Right cardiac atrium (tissue), 5 donors: ENCODE measurements at regions of chr2 and their contacts with region 1.

Region 1: GRCh38 chr2:219206442-219207253 is at the start of gene ZFAND2B:
- DNase-seq: peak; percentile 96 to 99 (median 98)
- ATAC-seq: peak; percentile 97 to 98
- H3K4me3 ChIP-seq: peak within 1 kb of the TSS; percentile 59
- H3K27ac ChIP-seq: peak within 1 kb of the TSS; percentile 92
- H3K4me1 ChIP-seq: peaks cover 10% of the 10 kb centered on the region
- H3K27me3 ChIP-seq: no peaks in the 10 kb centered on the region
- total RNA-seq, gene ZFAND2B: 21.8 to 28.9 (median 22.8) TPM

Region 2: GRCh38 chr2:219171231-219171651 is 35.4 kb before region 1 on chr2:
- intact Hi-C with region 1: loop called in 2 of 4 experiments (anchors 5 kb)
- DNase-seq: peak in 2 of 3 donors; percentile 43 to 75
- ATAC-seq: peak; percentile 69 to 75
- H3K4me3 ChIP-seq: no peak overlapping the region
- H3K27ac ChIP-seq: peak overlapping the region; percentile 31
- H3K4me1 ChIP-seq: peaks cover 3% of the 10 kb centered on the region
- H3K27me3 ChIP-seq: no peaks in the 10 kb centered on the region

Region 3: GRCh38 chr2:219177552-219178376 is 28.9 kb before region 1 on chr2 and contains the start of gene RETREG2:
- intact Hi-C with region 1: loop called in 2 of 4 experiments (anchors 5 kb)
- DNase-seq: peak; percentile 88 to 94 (median 94)
- ATAC-seq: peak; percentile 85 to 90
- H3K4me3 ChIP-seq: peak within 1 kb of the TSS; percentile 72
- H3K27ac ChIP-seq: peak within 1 kb of the TSS; percentile 100
- H3K4me1 ChIP-seq: peaks cover 2% of the 10 kb centered on the region
- H3K27me3 ChIP-seq: no peaks in the 10 kb centered on the region
- total RNA-seq, gene RETREG2: 35.2 to 47.3 (median 40.2) TPM